ENCODE measurements at regions of chr1 and their contacts with region 1.

Region 1: GRCh38 chr1:91282695-91283420 is 121.8 kb downstream of the HFM1 start:
- DNase-seq: no peak
- H3K4me3 Mint-ChIP-seq: no peak overlapping the region
- H3K27ac Mint-ChIP-seq: no peak overlapping the region
- H3K4me1 Mint-ChIP-seq: no peaks in the 10 kb centered on the region
- H3K27me3 Mint-ChIP-seq: peaks cover 6% of the 10 kb centered on the region

Region 2: GRCh38 chr1:91404151-91405012 is 121.5 kb after region 1 on chr1 and contains the start of gene HFM1:
- intact Hi-C with region 1: loop called (anchors 5 kb)
- DNase-seq: peak; percentile 24
- H3K4me3 Mint-ChIP-seq: peak within 1 kb of the TSS; percentile 57
- H3K27ac Mint-ChIP-seq: no peak within 1 kb of the TSS
- H3K4me1 Mint-ChIP-seq: peaks cover 2% of the 10 kb centered on the region
- H3K27me3 Mint-ChIP-seq: peaks cover 62% of the 10 kb centered on the region
- total RNA-seq, gene HFM1: not detected in 2 replicates

Region 3: DNA sequence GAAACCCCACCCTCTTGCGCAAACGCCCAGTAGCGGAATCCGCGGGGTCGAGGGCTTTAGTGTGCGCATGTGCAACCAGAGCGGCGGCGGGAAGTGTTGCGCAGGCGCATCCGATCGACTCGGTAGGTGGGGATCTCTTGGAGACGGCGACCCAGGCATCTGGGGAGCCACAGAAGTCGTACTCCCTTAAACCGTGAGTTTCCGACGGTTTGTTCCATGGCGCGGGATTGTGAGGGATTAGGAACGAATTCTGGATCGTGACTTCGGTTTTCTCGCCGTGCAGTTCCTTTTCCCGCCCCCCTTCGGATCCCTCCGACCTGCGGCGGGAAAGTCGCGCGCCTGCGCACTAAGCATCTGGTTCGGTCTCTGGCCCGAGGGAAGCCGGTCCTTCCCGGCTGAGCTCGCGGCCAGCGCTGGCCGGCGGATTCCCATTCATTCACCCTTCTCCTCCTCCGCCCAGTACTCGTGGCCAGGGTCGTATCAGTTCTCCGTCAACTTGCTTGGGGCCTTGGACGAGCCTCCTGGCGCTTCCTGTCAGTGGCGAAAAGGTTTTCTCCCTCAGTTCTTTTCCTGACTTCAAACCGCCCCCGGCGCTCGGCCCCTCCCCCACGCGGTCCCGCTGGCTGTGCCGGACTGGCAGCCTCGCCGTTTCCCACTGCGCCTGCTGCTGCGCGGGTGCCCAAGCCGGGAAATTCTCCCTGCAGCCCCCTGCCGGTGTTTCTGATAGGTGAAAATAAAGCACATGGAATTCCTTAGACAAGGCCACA is 218.1 kb after region 1 on chr1 and contains the start of gene CDC7:
- intact Hi-C with region 1: loop called (anchors 5 kb)
- DNase-seq: peak; percentile 84
- H3K4me3 Mint-ChIP-seq: no peak within 1 kb of the TSS
- H3K27ac Mint-ChIP-seq: no peak within 1 kb of the TSS
- H3K4me1 Mint-ChIP-seq: peaks cover 29% of the 10 kb centered on the region
- H3K27me3 Mint-ChIP-seq: no peaks in the 10 kb centered on the region
- total RNA-seq, gene CDC7: 27.4 and 28.8 TPM in 2 replicates

Region 4: GRCh38 chr1:91924146-91924545 is 641.3 kb after region 1 on chr1:
- intact Hi-C with region 1: loop called (anchors 2 kb)
- DNase-seq: no peak
- H3K4me3 Mint-ChIP-seq: no peak overlapping the region
- H3K27ac Mint-ChIP-seq: no peak overlapping the region
- H3K4me1 Mint-ChIP-seq: peaks cover 10% of the 10 kb centered on the region
- H3K27me3 Mint-ChIP-seq: no peaks in the 10 kb centered on the region

Measured in activated T-helper 2 cell treated with anti-CD3 and anti-CD28 coated beads, Interferon-gamma antibody, Interleukin-2, Interleukin-4, amounts not matched to agents 10 μg/mL and 5 μg/mL and 100 μg/mL, durations not matched to agents 14 hours and 24 hours and 36 hours (primary cell).